ENCODE measurements at regions of chr14 and their contacts with region 1.

Region 1: DNA sequence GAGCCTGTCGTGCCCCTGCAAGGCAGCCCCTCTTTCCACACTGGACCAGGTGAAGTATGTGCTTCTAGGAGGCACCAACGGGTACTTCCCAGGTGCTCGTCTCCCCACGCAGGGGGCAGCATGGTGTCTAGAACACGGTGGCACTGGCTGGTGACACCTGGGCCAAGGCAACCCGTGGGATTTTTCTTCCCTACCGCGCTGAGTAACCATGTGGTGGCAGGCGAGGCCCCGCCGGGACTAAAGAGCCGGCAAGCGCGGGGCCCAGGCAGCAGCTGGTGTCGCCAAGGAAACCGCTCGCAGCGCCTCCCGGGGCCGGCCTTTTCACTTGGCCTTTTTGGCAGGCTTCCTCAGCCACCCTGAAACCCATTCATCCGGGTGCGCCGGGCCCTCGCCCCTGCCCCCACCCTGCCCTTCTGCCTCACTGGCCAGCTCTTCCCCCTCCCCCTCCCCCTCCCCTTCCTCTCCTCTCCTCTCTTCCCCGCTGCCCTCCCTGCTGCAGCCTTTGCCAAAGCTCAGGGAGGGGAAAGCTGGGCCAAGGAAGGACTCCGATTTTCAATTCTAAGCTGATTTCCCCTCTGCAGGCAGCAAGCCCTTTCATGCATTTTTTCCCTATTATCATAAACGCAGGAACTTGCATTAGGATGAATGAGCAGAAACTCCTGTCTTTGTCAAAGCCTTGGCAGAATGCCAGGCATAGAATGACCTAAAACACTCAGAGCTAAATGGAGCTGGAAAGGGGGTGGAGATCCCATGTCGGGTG is 81.2 kb downstream of the IRF2BPL start:
- DNase-seq: peak; percentile 94
- ATAC-seq: peak; percentile 94

Region 2: GRCh38 chr14:77053046-77053841 is 106.0 kb after region 1 on chr14:
- intact Hi-C with region 1: loop called (anchors 5 kb)
- DNase-seq: peak; percentile 89
- ATAC-seq: peak; percentile 78